Activated CD4-positive, alpha-beta T cell treated with anti-CD3 and anti-CD28 coated beads for 36 hours (primary cell): ENCODE measurements at regions of chr17 and their contacts with region 1.

Region 1: DNA sequence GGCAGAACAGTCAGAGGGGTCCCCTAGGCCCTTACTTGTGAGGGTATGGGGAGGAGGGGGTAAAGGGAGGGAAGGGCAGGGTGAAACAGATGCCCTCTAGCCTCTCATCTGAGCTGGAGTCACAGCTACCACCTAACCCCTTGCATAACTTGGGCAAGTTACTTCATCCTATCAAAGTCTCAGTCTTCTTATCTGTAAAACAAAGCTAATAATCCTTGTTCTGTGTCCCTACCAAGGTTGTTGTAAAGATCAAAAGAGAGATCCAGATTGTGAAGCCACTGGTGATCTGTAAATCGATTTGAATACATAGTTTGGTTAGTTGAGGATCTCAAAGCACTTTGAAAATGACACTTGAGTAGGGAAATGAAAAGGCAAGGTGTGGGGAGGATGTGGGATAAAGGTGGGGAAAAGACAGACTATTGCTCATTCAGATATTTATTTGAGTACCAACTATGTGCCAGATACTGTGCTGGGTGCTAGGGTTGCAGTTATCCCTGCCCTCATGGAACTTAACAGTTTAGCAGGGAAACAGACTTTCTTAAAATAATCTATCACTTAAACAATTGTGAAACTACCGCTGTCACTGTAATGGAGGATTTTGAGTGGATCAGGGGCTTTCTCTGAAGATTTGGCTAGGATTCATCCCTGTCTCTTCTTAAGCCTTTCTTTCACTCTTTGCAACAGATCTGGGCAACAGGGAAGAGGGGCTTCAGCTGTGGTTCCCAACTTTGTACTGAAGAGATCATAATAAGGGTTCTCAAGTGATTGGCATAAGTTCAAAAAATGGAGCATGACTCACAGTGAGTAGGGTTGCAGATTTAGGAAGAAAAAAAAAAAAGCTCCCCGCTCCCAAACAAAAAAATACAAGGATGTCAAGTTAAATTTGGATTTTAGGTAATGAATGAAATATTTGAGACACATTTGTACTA is 3.0 kb downstream of the HEATR9 start:
- DNase-seq: no peak
- ATAC-seq: peak; percentile 47
- H3K4me3 Mint-ChIP-seq: no peak overlapping the region
- H3K27ac Mint-ChIP-seq: no peak overlapping the region
- H3K4me1 Mint-ChIP-seq: peaks cover 13% of the 10 kb centered on the region
- H3K27me3 Mint-ChIP-seq: no peaks in the 10 kb centered on the region

Region 2: GRCh38 chr17:35947156-35947585 is 81.5 kb after region 1 on chr17:
- CTCF ChIA-PET with region 1: interaction called, 3 read pairs
- POLR2A ChIA-PET with region 1: no interaction called
- intact Hi-C with region 1: loop called in 1 of 2 experiments (anchors 5 kb)
- DNase-seq: peak; percentile 69
- ATAC-seq: peak; percentile 81
- H3K4me3 Mint-ChIP-seq: no peak overlapping the region
- H3K27ac Mint-ChIP-seq: no peak overlapping the region
- H3K4me1 Mint-ChIP-seq: no peaks in the 10 kb centered on the region
- H3K27me3 Mint-ChIP-seq: no peaks in the 10 kb centered on the region

Region 3: DNA sequence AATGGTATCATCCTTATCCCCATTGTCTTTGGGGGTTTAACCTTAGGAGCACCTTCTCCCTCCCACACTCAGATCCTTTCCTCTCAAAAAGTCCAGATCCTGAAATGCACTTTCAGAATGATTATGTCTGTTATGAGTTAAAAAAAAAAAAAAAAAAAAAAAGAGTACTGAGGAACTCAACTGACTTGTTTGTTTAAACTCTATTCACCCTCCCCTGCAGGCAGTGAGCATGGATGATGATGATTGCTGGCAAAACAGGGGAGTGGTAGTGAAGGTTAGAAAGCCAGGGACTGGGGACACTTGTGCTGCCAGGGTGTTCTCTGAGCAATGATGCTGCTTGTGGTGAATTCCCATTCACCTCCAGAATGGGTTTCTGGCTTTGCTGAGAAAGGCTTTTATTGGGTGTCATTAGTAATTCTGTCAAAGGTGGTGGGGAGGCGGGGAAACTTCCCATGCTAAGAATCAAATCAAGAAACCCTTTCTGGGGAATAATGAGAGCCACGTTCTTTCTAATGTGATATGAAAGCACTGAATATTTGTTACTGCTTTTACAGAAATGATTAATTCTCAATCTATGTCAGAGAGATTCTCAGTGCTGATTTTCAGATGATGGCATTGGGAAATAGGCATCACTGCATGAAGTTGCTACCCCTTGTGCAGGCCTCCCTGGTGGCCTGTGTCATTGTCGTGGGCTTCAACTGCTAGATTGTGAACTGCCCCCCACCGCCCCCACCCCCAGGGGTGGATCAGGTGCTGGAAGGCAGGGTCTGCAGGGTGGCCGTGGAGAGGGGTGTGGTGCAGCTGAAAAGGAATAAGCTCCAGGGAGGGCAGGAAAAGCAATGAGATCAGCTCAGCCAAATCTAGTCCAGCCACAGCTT is 252.1 kb after region 1 on chr17:
- CTCF ChIA-PET with region 1: no interaction called
- POLR2A ChIA-PET with region 1: no interaction called
- intact Hi-C with region 1: no loop called
- DNase-seq: peak; percentile 77
- ATAC-seq: peak; percentile 92
- H3K4me3 Mint-ChIP-seq: peak overlapping the region; percentile 21
- H3K27ac Mint-ChIP-seq: peak overlapping the region; percentile 72
- H3K4me1 Mint-ChIP-seq: peaks cover 40% of the 10 kb centered on the region
- H3K27me3 Mint-ChIP-seq: peaks cover 22% of the 10 kb centered on the region